IMR-90 (cell line): ENCODE measurements at regions of chr10 and their contacts with region 1.

Region 1: DNA sequence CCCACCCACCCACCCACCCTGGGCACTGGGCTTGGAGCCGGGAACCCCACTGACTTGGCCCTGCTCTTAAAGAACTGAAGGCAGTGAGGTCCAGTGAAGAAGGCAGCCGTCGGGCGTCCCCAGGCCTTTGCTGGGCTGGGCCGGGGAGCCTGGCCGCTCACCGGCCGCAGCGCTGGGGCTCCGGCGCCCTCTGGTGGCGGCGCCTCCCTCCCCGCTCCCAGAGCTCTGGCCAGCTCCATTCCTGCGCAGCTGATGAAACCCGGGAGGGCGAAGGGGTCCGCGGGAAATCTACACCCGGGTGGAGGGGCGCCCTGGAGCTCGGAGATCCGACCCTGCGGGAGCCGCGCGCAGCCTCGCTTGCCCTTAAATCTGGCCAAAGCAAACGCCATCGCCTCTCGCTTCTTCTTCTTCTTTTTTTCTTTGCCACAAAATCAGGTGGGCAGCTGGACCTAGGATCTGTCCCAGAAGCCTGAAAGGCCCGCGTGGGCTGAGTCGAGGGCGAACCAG is 1.7 kb upstream of the CXCL12 start:
- DNase-seq: peak; percentile 62
- ATAC-seq: peak; percentile 81
- H3K4me3 ChIP-seq: no peak overlapping the region
- H3K27ac ChIP-seq: no peak overlapping the region
- H3K4me1 ChIP-seq: peaks cover 3% of the 10 kb centered on the region; the same call in 1 of the 2 replicates
- H3K27me3 ChIP-seq: peaks cover 3% of the 10 kb centered on the region; the same call in 1 of the 2 replicates
- CTCF ChIP-seq: peak; percentile 91
- POLR2A ChIP-seq: no peak
- RAD21 ChIP-seq: peak; percentile 95

Region 2: DNA sequence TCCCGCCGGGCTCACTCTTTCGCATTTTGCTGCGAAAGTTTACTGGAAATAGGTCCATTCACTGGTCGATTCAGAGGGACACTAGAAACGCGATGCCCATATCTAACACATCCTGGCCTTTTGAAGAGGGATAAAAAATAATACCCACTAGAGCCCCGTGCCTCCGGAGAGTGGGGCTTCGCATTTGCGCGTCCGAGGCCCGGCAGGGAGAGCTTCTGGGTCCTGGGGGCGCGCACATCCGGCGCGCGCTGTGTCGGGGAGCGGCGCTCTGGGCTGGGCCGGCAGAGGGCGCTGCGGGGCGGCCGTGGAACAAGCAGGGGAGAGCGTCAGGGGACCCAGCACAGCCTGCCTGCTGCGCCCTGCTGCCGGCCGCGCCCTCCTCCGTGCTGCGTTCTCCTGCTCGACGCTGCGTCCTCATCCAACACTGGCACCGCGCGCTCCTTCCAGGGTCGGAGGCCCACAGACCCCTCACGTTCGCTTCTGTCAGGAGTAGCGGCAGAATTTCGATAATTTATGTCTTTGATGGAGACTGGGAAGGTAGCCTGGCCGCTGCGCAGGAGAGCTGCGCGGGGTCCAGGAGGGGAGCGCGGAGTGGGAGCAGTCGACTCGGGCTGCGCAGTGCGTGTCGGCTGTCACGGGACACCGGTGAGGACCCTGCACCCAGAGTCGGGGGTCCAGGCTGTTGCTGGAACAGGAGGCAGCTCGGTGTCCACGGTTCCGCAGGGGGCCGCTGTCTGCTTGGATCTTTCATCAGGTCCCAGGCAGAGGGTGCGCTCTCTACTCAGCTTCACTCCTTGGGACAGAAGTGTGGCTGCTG is 696.4 kb before region 1 on chr10:
- CTCF ChIA-PET with region 1: interaction called, 4 read pairs
- POLR2A ChIA-PET with region 1: no interaction called
- dilution Hi-C with region 1: no loop called
- in situ Hi-C with region 1: no loop called
- intact Hi-C with region 1: loop called (anchors 1 kb)
- DNase-seq: peak; percentile 72
- ATAC-seq: peak; percentile 98
- H3K4me3 ChIP-seq: peak overlapping the region; percentile 61
- H3K27ac ChIP-seq: peak overlapping the region; percentile 76
- H3K4me1 ChIP-seq: peaks cover 8% of the 10 kb centered on the region; the same call in 1 of the 2 replicates
- H3K27me3 ChIP-seq: no peaks in the 10 kb centered on the region
- CTCF ChIP-seq: peak; percentile 88
- POLR2A ChIP-seq: peak; percentile 42; the same call in 1 of the 2 replicates
- RAD21 ChIP-seq: peak; percentile 87

Region 3: DNA sequence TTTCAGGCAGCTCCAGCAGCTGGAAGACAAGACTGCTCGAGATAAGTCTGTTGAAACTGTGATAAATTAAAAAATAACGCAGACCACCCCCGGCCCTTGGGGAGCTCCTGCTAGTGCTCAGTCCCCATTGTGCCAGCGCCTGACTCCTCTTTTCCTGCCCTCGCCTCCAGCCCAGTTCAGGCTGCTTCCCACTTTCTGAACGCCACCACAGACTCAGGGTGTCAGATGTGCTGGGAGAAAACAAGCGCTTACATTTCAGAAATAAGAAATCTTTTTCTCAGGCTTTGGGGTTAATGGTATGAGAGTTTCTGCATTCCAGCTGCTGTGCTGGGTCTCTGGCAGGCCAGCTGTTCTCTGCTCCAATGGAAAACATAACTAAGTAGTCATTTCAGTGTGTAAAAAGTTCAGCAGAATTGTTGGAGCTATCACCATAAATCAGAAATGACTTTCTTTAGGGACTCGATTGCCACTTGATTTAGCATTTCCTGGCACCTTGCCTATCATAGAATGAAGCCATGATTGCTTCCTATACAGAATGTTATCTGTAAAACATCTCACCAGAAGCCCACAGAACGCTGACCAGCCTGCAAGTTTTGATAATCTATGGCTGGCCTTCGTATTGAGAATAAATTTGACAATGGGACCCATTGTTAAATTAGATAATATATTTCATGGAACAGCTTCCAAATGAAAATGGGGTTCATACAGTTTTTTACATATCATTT is 480.9 kb before region 1 on chr10:
- CTCF ChIA-PET with region 1: no interaction called
- POLR2A ChIA-PET with region 1: no interaction called
- dilution Hi-C with region 1: no loop called
- in situ Hi-C with region 1: no loop called
- intact Hi-C with region 1: loop called (anchors 5 kb)
- DNase-seq: peak; percentile 68
- ATAC-seq: peak; percentile 81
- H3K4me3 ChIP-seq: no peak overlapping the region
- H3K27ac ChIP-seq: peak overlapping the region; percentile 59; the same call in 1 of the 2 replicates
- H3K4me1 ChIP-seq: peaks cover 25% of the 10 kb centered on the region
- H3K27me3 ChIP-seq: no peaks in the 10 kb centered on the region
- CTCF ChIP-seq: no peak
- POLR2A ChIP-seq: no peak
- RAD21 ChIP-seq: no peak

Region 4: GRCh38 chr10:44180321-44181168 is 206.1 kb before region 1 on chr10:
- CTCF ChIA-PET with region 1: no interaction called
- POLR2A ChIA-PET with region 1: no interaction called
- dilution Hi-C with region 1: no loop called
- in situ Hi-C with region 1: no loop called
- intact Hi-C with region 1: loop called (anchors 10 kb)
- DNase-seq: peak; percentile 95
- ATAC-seq: peak; percentile 83
- H3K4me3 ChIP-seq: no peak overlapping the region
- H3K27ac ChIP-seq: no peak overlapping the region
- H3K4me1 ChIP-seq: peaks cover 7% of the 10 kb centered on the region
- H3K27me3 ChIP-seq: no peaks in the 10 kb centered on the region
- CTCF ChIP-seq: no peak
- POLR2A ChIP-seq: no peak
- RAD21 ChIP-seq: no peak

Region 5: GRCh38 chr10:44857363-44858016 is 470.9 kb after region 1 on chr10:
- CTCF ChIA-PET with region 1: interaction called, 8 read pairs
- POLR2A ChIA-PET with region 1: no interaction called
- dilution Hi-C with region 1: no loop called
- in situ Hi-C with region 1: loop called (anchors 5 kb)
- intact Hi-C with region 1: loop called (anchors 1 kb)
- DNase-seq: peak; percentile 84
- ATAC-seq: peak; percentile 91
- H3K4me3 ChIP-seq: no peak overlapping the region
- H3K27ac ChIP-seq: no peak overlapping the region
- H3K4me1 ChIP-seq: peaks cover 4% of the 10 kb centered on the region; the same call in 1 of the 2 replicates
- H3K27me3 ChIP-seq: no peaks in the 10 kb centered on the region
- CTCF ChIP-seq: peak; percentile 94
- POLR2A ChIP-seq: no peak
- RAD21 ChIP-seq: peak; percentile 97